ENCODE measurements at regions of chr11 and their contacts with region 1.

Region 1: DNA sequence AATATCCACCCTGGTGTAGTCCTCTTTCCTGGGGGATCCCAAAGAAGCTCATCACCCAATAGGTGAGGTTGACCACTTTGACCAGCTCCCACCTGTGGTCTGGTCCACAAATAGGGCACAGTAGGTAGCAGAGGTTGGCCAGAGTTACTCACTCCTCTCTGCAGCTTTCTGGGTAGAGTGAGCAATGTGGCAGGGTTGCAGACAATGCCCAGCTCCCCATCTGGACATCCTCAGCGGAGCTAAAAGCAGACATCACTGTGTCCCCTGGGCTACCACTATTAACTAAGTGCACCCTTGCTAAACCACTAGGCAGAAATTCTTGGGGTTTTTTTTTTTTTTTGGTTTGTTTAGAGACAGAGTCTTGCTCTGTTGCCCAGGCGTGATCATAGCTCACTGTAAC is 48.4 kb upstream of the TP53I11 start:
- DNase-seq: no peak
- ATAC-seq: no peak
- H3K4me3 ChIP-seq: no peak overlapping the region
- H3K4me3 Mint-ChIP-seq: no peak overlapping the region
- H3K27ac ChIP-seq: no peak overlapping the region
- H3K27ac Mint-ChIP-seq: no peak overlapping the region
- H3K4me1 ChIP-seq: no peaks in the 10 kb centered on the region
- H3K4me1 Mint-ChIP-seq: no peaks in the 10 kb centered on the region
- H3K27me3 ChIP-seq: peaks cover 0 to 9% of the 10 kb centered on the region in 2 experiments
- H3K27me3 Mint-ChIP-seq: no peaks in the 10 kb centered on the region

Region 2: DNA sequence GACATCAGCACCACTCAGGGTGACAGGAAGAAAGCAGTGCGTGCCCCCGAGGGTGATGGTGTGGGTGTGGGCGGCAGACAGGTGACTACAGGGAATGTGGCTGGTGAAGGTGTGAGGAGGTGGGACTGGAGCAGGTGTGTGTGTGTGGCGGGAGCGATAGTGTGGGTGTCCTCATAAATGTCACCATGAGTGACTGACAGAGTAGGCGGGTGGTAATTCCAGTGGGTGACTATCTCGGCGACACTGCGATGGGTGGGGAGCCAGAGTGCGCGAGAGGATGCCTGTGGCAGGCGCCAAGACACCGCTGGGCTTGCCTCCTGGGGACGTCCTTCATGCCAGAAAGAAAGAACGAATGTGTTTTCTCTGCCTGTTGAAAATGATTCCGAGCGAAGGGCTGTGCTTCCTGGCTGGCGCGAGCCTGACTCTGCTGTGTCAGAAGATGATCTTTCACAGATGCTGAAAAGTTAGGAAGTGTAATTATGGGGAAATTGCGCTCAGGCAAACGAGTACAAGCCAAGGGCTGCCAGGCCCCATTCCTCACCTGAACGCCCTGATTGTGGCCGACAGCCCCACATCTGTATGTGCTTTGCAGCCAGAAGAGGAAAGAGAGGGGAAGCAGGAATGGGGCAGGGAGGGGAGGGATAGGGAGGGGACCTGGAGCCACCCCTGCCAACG is 532.4 kb before region 1 on chr11:
- CTCF ChIA-PET with region 1: no interaction called
- POLR2A ChIA-PET with region 1: interaction called in 1 of 2 experiments, 11 read pairs
- DNase-seq: no peak
- ATAC-seq: no peak
- H3K4me3 ChIP-seq: no peak overlapping the region
- H3K4me3 Mint-ChIP-seq: no peak overlapping the region
- H3K27ac ChIP-seq: no peak overlapping the region
- H3K27ac Mint-ChIP-seq: no peak overlapping the region
- H3K4me1 ChIP-seq: no peaks in the 10 kb centered on the region
- H3K4me1 Mint-ChIP-seq: no peaks in the 10 kb centered on the region
- H3K27me3 ChIP-seq: peaks cover 0 to 32% of the 10 kb centered on the region in 2 experiments
- H3K27me3 Mint-ChIP-seq: peaks cover 20 to 22% of the 10 kb centered on the region in 2 donors